ENCODE measurements at regions of chr2 and their contacts with region 1.

Region 1: GRCh38 chr2:55779459-55780421 is 86.1 kb upstream of the PNPT1 start:
- DNase-seq: no peak
- ATAC-seq: no peak
- H3K4me3 ChIP-seq: no peak overlapping the region
- H3K27ac ChIP-seq: no peak overlapping the region
- H3K4me1 ChIP-seq: no peaks in the 10 kb centered on the region
- H3K27me3 ChIP-seq: no peaks in the 10 kb centered on the region
- CTCF ChIP-seq: no peak

Region 2: DNA sequence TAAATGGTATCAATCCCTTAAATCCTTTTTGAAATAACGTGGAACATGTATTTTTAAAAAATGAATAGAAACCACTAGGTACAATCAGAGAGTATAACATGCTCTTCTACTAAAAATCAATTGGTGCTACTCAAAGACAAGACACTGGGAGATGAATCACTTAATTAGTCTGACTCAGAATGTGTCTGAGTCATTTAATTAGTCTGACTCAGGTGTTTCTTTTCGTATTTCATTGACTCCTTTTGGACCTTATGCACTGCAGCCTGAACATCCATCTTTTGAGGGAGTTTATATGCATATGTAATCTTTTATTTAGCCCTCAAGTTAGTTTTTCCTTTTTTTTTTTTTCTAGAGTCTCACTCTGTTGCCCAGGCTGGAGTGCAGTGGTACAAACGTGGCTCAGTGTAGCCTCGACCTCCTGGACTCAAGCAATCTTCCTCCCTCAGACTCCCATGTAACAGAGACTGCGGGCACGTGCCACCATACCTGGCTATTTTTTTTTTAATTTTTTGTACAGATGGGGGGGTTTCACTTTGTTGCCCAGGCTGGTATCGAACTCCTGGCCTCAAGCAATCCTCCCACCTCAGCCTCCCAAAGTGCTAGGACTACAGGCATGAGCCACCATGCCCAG is 188.8 kb before region 1 on chr2:
- intact Hi-C with region 1: no loop called
- DNase-seq: no peak
- ATAC-seq: no peak
- H3K4me3 ChIP-seq: no peak overlapping the region
- H3K27ac ChIP-seq: no peak overlapping the region
- H3K4me1 ChIP-seq: peaks cover 0 to 25% (median 3%) of the 10 kb centered on the region in 9 donors
- H3K27me3 ChIP-seq: no peaks in the 10 kb centered on the region
- CTCF ChIP-seq: no peak

Region 3: DNA sequence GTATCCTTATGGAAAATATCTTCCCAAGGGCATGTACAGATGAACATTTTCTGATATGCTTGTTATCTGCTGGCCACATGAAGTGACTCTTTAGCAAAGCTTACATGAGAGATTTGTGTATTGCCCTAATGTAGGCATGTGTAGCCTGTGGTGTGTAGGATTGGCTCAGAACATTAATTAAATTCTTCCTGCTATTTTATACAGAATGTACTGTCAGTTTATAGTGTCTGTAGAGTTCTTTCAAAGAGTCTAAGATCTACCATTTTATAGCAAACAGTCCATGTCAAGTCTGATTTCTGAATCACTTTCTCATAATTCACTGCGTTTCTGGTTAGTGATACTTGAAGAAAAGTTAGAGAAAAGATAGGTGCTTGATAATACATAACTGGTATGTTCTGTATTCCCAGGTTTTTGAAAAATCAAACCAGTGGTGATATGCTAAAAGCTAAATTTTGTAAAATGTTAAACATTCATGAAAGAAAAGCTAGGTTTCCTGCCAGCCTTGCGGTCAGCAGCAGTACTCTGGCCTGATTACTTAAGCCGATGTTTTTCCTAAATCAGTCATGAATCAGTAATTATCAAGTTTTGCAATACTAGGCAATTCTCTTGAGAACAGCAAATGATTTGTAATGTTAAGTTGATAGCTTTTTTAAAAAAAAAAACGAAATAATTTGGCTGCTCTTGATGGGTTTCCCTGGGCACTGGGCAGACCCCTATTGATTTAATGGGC is 174.7 kb after region 1 on chr2:
- intact Hi-C with region 1: loop called in 1 of 10 experiments (anchors 5 kb)
- DNase-seq: no peak
- ATAC-seq: peak in 4 of 8 donors; percentile 17 to 57 (median 44)
- H3K4me3 ChIP-seq: no peak overlapping the region
- H3K27ac ChIP-seq: peak overlapping the region in 6 of 10 donors; percentile 16 to 65 (median 29)
- H3K4me1 ChIP-seq: peaks cover 0 to 11% (median 0%) of the 10 kb centered on the region in 9 donors
- H3K27me3 ChIP-seq: no peaks in the 10 kb centered on the region
- CTCF ChIP-seq: no peak